Endothelial cell of umbilical vein (primary cell): ENCODE measurements at regions of chr1 and their contacts with region 1.

Region 1: GRCh38 chr1:201769966-201770365 is 59.0 kb upstream of the IPO9 start:
- DNase-seq: peak; percentile 70
- H3K4me3 ChIP-seq: no peak overlapping the region
- H3K27ac ChIP-seq: no peak overlapping the region
- H3K4me1 ChIP-seq: peaks cover 41% of the 10 kb centered on the region
- H3K27me3 ChIP-seq: no peaks in the 10 kb centered on the region
- CTCF ChIP-seq: no peak
- POLR2A ChIP-seq: no peak

Region 2: GRCh38 chr1:201748335-201748734 is 21.6 kb before region 1 on chr1:
- CTCF ChIA-PET with region 1: interaction called, 7 read pairs
- POLR2A ChIA-PET with region 1: interaction called, 3 read pairs
- dilution Hi-C with region 1: no loop called
- intact Hi-C with region 1: loop called (anchors 2 kb)
- DNase-seq: peak; percentile 84
- H3K4me3 ChIP-seq: no peak overlapping the region
- H3K27ac ChIP-seq: peak overlapping the region; percentile 99
- H3K4me1 ChIP-seq: peaks cover 64% of the 10 kb centered on the region
- H3K27me3 ChIP-seq: no peaks in the 10 kb centered on the region
- CTCF ChIP-seq: no peak
- POLR2A ChIP-seq: peak; percentile 46

Region 3: GRCh38 chr1:201818971-201819750 is 49.2 kb after region 1 on chr1:
- CTCF ChIA-PET with region 1: no interaction called
- POLR2A ChIA-PET with region 1: no interaction called
- dilution Hi-C with region 1: no loop called
- intact Hi-C with region 1: no loop called
- DNase-seq: no peak
- H3K4me3 ChIP-seq: no peak overlapping the region
- H3K27ac ChIP-seq: no peak overlapping the region
- H3K4me1 ChIP-seq: no peaks in the 10 kb centered on the region
- H3K27me3 ChIP-seq: no peaks in the 10 kb centered on the region
- CTCF ChIP-seq: no peak
- POLR2A ChIP-seq: no peak